Dendritic cell treated with granulocyte-macrophage colony-stimulating factor and Interleukin-4, amounts not matched to agents 40 ng/mL and 50 ng/mL, for 4 days (primary cell): ENCODE measurements at regions of chr13 and their contacts with region 1.

Region 1: DNA sequence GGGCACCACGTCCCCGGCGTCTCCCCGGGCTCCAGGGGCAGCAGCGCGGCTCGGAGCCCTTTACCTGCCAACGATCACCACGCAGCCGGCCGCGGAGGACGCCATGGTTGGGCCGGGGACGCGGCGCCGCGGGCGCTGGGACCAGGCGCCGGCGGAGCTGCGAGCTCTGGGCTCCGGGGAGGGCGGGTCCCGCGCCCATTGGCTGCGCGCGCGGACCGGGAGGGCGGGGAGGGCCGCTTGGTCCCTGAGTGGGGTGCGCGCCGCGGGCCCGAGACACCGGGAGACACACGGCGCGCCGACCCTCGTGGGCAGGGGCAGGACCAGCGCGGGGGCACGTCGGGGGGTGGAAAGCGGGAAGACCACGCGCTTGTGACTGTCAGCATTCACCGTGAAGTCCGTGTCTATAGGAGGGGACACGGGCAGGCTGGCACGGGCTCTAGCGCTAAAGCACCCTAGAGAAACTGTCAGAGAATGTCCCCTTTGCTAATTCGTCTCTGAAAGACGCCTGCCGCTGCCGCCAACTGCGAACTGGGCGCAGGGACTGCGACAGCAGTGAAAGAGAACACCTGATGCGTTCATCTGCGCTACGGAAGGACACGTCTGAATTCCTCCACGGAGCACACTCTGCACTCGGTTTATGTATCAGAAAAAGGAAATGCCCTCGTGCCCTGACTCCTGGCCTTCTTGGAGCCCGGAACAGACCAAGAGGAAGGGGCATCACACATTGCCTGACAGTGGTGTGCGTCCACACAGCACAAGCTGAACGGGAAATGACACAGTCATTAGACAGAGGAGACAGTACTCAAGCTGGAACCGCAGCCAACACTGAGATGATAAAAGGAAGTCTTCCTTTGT is at the start of gene CRYL1:
- H3K4me3 Mint-ChIP-seq: peak within 1 kb of the TSS; percentile 86
- H3K27ac Mint-ChIP-seq: peak within 1 kb of the TSS; percentile 96
- H3K4me1 Mint-ChIP-seq: peaks cover 42% of the 10 kb centered on the region
- H3K27me3 Mint-ChIP-seq: no peaks in the 10 kb centered on the region

Region 2: DNA sequence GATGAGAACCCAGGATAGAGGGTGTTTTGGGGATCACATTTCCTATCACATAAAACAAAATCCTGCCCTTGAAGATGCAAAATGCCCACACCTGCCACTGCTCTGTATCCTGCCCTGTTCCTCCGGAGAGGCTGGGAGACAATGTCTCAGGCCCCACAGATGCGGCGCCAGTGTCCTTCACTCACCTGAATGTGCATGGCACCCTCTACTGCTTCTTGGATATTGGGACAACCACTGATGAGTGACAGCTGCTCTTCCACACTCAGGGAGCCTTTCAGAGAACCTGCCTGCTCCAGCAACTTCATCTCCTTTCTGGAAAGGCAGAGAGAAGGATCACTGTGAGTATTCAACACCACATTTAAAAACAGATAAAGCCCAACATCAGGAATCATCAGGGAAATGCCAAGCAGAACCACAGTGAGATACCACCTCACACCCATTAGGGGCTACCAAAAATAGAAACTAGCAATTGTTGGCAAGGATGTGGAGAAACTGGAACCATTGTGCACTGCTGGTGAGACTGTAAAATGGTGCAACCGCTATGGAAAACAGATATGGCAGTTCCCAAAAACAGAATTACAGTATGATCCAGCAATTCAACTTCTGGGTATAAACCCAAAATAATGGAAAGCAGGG is 36.6 kb before region 1 on chr13:
- intact Hi-C with region 1: no loop called
- H3K4me3 Mint-ChIP-seq: no peak overlapping the region
- H3K27ac Mint-ChIP-seq: no peak overlapping the region
- H3K4me1 Mint-ChIP-seq: no peaks in the 10 kb centered on the region
- H3K27me3 Mint-ChIP-seq: no peaks in the 10 kb centered on the region

Region 3: DNA sequence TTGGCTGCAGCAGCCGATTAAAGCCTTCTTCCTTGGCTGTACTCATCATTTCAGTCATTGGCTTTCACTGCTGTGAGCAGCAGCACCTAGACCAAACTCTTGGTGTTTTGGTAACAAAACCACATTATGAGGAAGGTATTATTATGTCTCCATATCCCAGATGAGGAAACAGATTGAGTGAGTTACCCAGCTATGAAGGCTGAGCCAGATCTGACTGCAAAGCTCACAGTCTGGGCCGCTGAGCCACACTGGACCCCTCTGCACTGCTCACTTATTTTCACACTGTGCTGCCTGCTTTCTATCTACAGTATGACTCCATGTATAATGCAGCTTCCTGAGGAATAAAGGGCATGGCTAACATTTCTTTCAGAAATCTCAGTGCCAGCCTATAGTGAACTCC is 24.8 kb before region 1 on chr13:
- intact Hi-C with region 1: loop called (anchors 1 kb)
- H3K4me3 Mint-ChIP-seq: no peak overlapping the region
- H3K27ac Mint-ChIP-seq: peak overlapping the region; percentile 78
- H3K4me1 Mint-ChIP-seq: peaks cover 38% of the 10 kb centered on the region
- H3K27me3 Mint-ChIP-seq: no peaks in the 10 kb centered on the region

Region 4: GRCh38 chr13:20544201-20544923 is 18.4 kb after region 1 on chr13:
- intact Hi-C with region 1: loop called (anchors 1 kb)
- H3K4me3 Mint-ChIP-seq: peak overlapping the region; percentile 20
- H3K27ac Mint-ChIP-seq: peak overlapping the region; percentile 84
- H3K4me1 Mint-ChIP-seq: peaks cover 29% of the 10 kb centered on the region
- H3K27me3 Mint-ChIP-seq: no peaks in the 10 kb centered on the region

Region 5: GRCh38 chr13:20559659-20560356 is 33.9 kb after region 1 on chr13:
- intact Hi-C with region 1: no loop called
- H3K4me3 Mint-ChIP-seq: no peak overlapping the region
- H3K27ac Mint-ChIP-seq: no peak overlapping the region
- H3K4me1 Mint-ChIP-seq: peaks cover 13% of the 10 kb centered on the region
- H3K27me3 Mint-ChIP-seq: peaks cover 3% of the 10 kb centered on the region